Kidney (tissue), 22 donors: ENCODE measurements at regions of chr1 and their contacts with region 1.

Region 1: DNA sequence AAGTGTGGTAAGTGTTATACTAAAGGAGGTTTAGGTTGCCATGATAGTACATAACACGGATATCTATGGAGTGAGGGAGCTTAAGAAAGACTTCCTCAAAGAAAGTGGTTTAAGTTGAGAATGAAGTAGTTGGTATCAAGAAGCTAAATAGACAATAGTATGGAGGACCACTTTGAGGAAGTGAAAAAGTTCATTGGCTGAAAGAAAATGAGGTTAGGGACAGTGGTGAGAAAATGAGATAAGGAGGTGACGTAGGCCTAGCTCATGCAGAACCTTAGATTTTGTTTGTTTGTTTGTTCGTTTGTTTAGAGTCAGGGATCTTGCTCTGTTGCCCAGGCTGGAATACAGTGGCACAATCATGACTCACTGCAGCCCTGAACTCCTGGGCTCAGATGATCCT is 72.2 kb upstream of the PPIH start:
- DNase-seq: no peak
- H3K4me3 ChIP-seq: no peak overlapping the region
- H3K27ac ChIP-seq: no peak overlapping the region
- H3K4me1 ChIP-seq: no peaks in the 10 kb centered on the region
- H3K27me3 ChIP-seq: no peaks in the 10 kb centered on the region
- CTCF ChIP-seq: no peak

Region 2: GRCh38 chr1:42747125-42747524 is 161.1 kb after region 1 on chr1:
- intact Hi-C with region 1: loop called (anchors 10 kb)
- DNase-seq: peak in 4 of 5 donors; percentile 62 to 73 (median 68)
- H3K4me3 ChIP-seq: no peak overlapping the region
- H3K27ac ChIP-seq: no peak overlapping the region
- H3K4me1 ChIP-seq: peaks cover 0 to 2% (median 0%) of the 10 kb centered on the region in 3 donors
- H3K27me3 ChIP-seq: no peaks in the 10 kb centered on the region
- CTCF ChIP-seq: peak; percentile 72